ENCODE measurements at regions of chr5 and their contacts with region 1.

Region 1: DNA sequence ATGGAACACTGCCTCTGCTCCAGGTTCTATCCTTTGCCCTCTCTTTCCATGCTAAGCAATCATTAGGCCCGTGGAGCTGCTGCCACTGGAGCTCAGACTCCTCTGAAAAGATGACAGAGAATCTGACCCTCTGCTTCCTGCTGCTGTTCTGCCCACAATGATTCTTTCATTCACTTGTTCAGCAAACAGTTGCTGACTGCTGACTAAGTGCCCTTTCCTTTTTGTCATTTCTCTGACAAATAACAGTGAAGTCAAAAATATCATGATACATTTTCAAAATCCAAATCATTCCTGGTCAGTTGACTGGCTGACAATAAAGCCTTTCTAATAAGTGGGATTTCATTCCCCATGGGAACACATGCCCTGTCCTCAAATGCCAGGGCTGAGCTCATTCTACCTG is 110.1 kb downstream of the SIL1 start:
- DNase-seq: peak in 2 of 3 donors; percentile 33 to 55
- H3K4me3 ChIP-seq: no peak overlapping the region
- H3K27ac ChIP-seq: no peak overlapping the region
- H3K4me1 ChIP-seq: peaks cover 2 to 49% (median 29%) of the 10 kb centered on the region in 4 experiments
- H3K27me3 ChIP-seq: no peaks in the 10 kb centered on the region

Region 2: DNA sequence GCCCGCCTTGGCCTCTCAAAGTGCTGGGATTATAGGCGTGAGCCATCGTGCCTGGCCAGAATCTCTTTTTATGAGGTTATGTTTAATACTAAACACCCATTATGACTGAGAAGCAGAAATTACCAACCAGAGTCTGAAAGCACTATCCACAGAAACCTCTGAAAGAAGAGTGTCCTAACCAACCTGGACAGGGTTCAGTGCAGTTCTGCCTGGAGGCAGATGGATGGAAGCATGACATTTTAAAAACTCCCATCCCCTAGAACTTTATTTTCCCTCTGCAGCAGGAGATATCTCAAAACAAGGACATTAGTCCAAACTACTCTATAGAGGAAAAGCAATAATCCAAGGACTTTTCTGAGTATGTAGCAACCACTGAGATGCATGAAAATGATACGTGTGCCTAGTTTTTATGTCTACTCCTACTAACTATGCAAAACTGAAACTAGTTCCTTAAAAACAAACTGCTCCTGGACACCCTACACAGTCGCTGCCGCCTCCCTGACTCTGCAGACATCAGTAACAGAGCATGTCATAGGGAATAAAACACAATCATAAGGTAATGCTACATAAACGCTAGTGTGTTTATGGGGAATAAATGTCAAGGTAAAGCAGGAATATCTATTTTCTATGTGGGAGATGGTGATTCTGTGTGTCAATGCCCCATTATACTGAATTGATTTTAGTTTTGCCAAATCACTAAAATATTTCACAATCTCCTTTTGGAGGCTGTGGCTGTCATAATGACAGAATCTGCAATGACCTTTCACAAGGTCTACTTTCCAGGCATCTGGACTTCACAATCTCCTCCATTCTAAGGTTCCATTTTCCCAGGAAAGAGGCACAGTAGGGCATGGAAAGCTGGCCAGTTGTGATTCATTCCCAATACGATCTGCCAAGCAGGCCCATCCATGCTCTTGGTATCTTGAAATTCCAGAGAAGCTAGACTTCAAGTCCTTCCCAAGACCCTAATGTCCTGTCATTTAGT is 12.7 kb before region 1 on chr5:
- CTCF ChIA-PET with region 1: interaction called, 32 read pairs
- POLR2A ChIA-PET with region 1: no interaction called
- DNase-seq: peak; percentile 17 to 68 (median 55)
- H3K4me3 ChIP-seq: peak overlapping the region in 5 of 7 experiments; percentile 27 to 69 (median 52)
- H3K27ac ChIP-seq: peak overlapping the region in 1 of 2 experiments; percentile 10
- H3K4me1 ChIP-seq: peaks cover 3 to 31% (median 21%) of the 10 kb centered on the region in 4 experiments
- H3K27me3 ChIP-seq: no peaks in the 10 kb centered on the region

Region 3: DNA sequence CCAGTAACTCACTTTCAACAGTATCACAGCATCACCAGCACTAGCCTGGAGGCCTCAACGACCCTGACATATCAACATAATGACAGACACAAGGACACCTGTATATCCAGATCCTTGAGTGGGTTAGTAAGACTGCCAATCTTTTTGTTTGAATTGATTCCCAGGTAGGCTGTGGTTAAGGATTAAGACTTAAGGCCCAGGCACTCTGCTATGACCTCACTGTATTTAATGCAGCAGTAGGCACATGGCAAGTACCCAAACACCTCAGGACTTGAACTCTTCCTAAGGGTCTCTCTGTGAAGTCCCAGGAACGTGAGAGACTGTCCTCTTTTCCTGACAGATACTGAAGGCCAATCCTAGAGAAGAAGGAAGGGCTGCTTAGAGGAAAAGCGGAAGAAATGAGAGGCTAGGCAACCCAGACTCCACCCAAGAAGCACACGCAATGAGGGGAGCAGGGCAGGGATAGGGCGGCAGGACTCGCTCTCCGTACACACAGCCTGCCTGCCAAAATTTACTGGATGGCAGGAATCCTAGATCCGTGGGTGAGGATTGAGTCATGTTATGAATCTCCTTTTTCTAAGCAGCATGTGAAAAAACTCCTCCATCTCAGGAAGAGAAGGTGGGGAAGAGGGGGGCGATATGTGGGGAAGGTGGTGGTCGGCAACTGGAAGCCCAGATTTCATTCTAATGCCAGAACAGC is 16.7 kb after region 1 on chr5:
- CTCF ChIA-PET with region 1: no interaction called
- POLR2A ChIA-PET with region 1: no interaction called
- DNase-seq: no peak
- H3K4me3 ChIP-seq: no peak overlapping the region
- H3K27ac ChIP-seq: no peak overlapping the region
- H3K4me1 ChIP-seq: no peaks in the 10 kb centered on the region
- H3K27me3 ChIP-seq: no peaks in the 10 kb centered on the region

Measured in common myeloid progenitor, CD34-positive (primary cell).